MCF 10A (cell line): ENCODE measurements at regions of chr1 and their contacts with region 1.

Region 1: GRCh38 chr1:99645699-99646531 is at the start of gene PALMD:
- DNase-seq: peak; percentile 71
- H3K4me3 Mint-ChIP-seq: peak within 1 kb of the TSS; percentile 56
- H3K27ac Mint-ChIP-seq: peak within 1 kb of the TSS; percentile 46
- H3K4me1 Mint-ChIP-seq: peaks cover 34% of the 10 kb centered on the region
- H3K27me3 Mint-ChIP-seq: no peaks in the 10 kb centered on the region
- CTCF ChIP-seq: no peak
- total RNA-seq, gene PALMD: 0.12 and 0.33 TPM in 2 replicates

Region 2: GRCh38 chr1:99621340-99621901 is 24.5 kb before region 1 on chr1:
- CTCF ChIA-PET with region 1: interaction called, 4 read pairs
- POLR2A ChIA-PET with region 1: interaction called, 20 read pairs
- intact Hi-C with region 1: no loop called
- DNase-seq: peak; percentile 89
- H3K4me3 Mint-ChIP-seq: no peak overlapping the region
- H3K27ac Mint-ChIP-seq: peak overlapping the region; percentile 81
- H3K4me1 Mint-ChIP-seq: peaks cover 15% of the 10 kb centered on the region
- H3K27me3 Mint-ChIP-seq: no peaks in the 10 kb centered on the region
- CTCF ChIP-seq: no peak

Region 3: GRCh38 chr1:99662581-99663208 is 16.8 kb after region 1 on chr1:
- CTCF ChIA-PET with region 1: interaction called, 38 read pairs
- POLR2A ChIA-PET with region 1: interaction called, 148 read pairs
- intact Hi-C with region 1: no loop called
- DNase-seq: peak; percentile 98
- H3K4me3 Mint-ChIP-seq: no peak overlapping the region
- H3K27ac Mint-ChIP-seq: peak overlapping the region; percentile 95
- H3K4me1 Mint-ChIP-seq: peaks cover 29% of the 10 kb centered on the region
- H3K27me3 Mint-ChIP-seq: no peaks in the 10 kb centered on the region
- CTCF ChIP-seq: no peak

Region 4: DNA sequence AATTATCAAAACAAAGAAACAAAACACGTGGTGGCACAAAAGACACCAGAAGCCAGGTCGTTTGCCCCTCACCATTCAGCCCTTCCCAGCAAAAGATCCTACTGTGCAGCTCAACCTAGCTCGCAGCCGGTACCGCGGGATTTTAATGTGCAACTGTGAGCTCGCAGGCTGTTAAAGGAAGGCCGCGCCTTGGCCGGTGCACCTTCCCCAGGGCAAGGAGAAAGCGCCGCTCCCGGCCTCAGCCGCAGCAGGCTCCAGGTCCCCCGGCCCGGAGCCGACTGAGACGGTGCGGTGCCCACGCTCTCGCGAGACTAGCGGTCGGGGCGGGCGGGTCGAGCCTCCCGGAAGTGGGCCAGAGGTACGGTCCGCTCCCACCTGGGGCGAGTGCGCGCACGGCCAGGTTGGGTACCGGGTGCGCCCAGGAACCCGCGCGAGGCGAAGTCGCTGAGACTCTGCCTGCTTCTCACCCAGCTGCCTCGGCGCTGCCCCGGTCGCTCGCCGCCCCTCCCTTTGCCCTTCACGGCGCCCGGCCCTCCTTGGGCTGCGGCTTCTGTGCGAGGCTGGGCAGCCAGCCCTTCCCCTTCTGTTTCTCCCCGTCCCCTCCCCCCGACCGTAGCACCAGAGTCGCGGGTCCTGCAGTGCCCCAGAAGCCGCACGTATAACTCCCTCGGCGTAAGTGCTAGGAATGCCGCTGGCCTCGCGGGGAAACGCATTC is 204.0 kb after region 1 on chr1 and contains the start of gene AGL:
- CTCF ChIA-PET with region 1: no interaction called
- POLR2A ChIA-PET with region 1: no interaction called
- intact Hi-C with region 1: no loop called
- DNase-seq: peak; percentile 84
- H3K4me3 Mint-ChIP-seq: peak within 1 kb of the TSS; percentile 93
- H3K27ac Mint-ChIP-seq: peak within 1 kb of the TSS; percentile 85
- H3K4me1 Mint-ChIP-seq: peaks cover 14% of the 10 kb centered on the region
- H3K27me3 Mint-ChIP-seq: no peaks in the 10 kb centered on the region
- CTCF ChIP-seq: no peak
- total RNA-seq, gene AGL: 8.9 and 9.1 TPM in 2 replicates